ENCODE measurements at regions of chr1 and their contacts with region 1.

Region 1: GRCh38 chr1:24688621-24689195 is 45.6 kb downstream of the SRRM1 start:
- DNase-seq: peak; percentile 63 to 85
- H3K4me3 ChIP-seq: no peak overlapping the region; a peak in 1 of 8 replicates
- H3K27ac ChIP-seq: no peak overlapping the region
- H3K4me1 ChIP-seq: peaks cover 0 to 2% (median 1%) of the 10 kb centered on the region in 4 experiments; a peak in 2 of 7 replicates
- H3K27me3 ChIP-seq: no peaks in the 10 kb centered on the region
- CTCF ChIP-seq: peak; percentile 82 to 94 (median 93)
- EP300 ChIP-seq: no peak
- POLR2A ChIP-seq: no peak
- RAD21 ChIP-seq: peak; percentile 97

Region 2: GRCh38 chr1:24575915-24576587 is 112.7 kb before region 1 on chr1:
- CTCF ChIA-PET with region 1: no interaction called
- POLR2A ChIA-PET with region 1: no interaction called
- DNase-seq: no peak
- H3K4me3 ChIP-seq: no peak overlapping the region
- H3K27ac ChIP-seq: no peak overlapping the region
- H3K4me1 ChIP-seq: no peaks in the 10 kb centered on the region; a peak in 1 of 7 replicates
- H3K27me3 ChIP-seq: no peaks in the 10 kb centered on the region
- CTCF ChIP-seq: no peak
- EP300 ChIP-seq: no peak
- POLR2A ChIP-seq: no peak
- RAD21 ChIP-seq: no peak

Region 3: GRCh38 chr1:24705260-24706073 is 16.8 kb after region 1 on chr1:
- CTCF ChIA-PET with region 1: interaction called, 40 read pairs
- POLR2A ChIA-PET with region 1: interaction called, 4 read pairs
- DNase-seq: peak; percentile 61 to 82
- H3K4me3 ChIP-seq: no peak overlapping the region
- H3K27ac ChIP-seq: no peak overlapping the region
- H3K4me1 ChIP-seq: peaks cover 6 to 12% (median 9%) of the 10 kb centered on the region in 4 experiments; a peak in 5 of 7 replicates
- H3K27me3 ChIP-seq: no peaks in the 10 kb centered on the region
- CTCF ChIP-seq: no peak
- EP300 ChIP-seq: no peak
- POLR2A ChIP-seq: 0 out of 3 replicates have a peak, but pooled peaks of 1 of the 2 experiments have one; percentile 19
- RAD21 ChIP-seq: no peak

Region 4: DNA sequence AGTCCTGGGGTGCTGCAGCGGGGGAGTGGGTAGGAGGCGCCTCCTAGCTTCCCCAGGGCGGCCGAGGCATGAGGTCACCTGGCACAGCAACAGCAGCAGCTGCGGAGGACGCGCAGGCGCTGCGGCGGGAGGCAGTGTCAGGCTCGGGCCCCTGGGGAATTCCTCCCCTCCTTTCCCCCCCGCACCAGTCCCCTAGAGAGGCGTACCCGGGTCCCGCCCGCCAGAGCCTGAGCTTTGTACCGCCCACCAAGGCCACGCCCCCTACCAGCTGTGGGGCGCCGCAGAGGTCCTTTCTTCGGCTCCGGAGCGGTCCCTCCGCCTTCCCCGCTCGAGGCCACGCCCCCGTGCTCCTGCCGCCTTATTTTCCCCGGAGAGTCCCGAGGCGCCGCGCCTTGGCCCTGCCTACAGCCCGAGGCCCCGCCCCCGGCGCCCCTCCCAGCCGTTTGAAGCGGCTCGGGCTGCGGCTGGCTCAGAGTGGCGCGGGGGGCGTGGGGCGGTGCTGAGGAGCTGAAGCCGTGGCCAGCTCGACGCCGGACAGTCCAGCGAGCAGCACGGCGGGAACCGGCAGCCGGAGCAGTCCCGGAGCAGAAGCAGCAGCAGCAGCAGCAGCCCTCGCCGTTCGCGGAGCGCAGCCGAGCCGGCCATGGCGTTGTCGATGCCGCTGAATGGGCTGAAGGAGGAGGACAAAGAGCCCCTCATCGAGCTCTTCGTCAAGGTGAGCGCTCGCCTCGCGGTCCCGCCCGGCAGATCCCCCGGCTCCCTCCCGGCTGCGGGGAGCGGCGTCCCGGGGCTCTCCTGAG is 56.4 kb after region 1 on chr1 and contains the start of gene CLIC4:
- CTCF ChIA-PET with region 1: interaction called, 13 read pairs
- POLR2A ChIA-PET with region 1: interaction called, 3 read pairs
- DNase-seq: peak; percentile 97 to 100
- H3K4me3 ChIP-seq: peak within 1 kb of the TSS; percentile 93 to 97 (median 95)
- H3K27ac ChIP-seq: peak within 1 kb of the TSS; percentile 73
- H3K4me1 ChIP-seq: peaks cover 14 to 31% (median 18%) of the 10 kb centered on the region in 4 experiments; a peak in 6 of 7 replicates
- H3K27me3 ChIP-seq: no peaks in the 10 kb centered on the region
- CTCF ChIP-seq: peak in 2 of 3 experiments; percentile 5 to 11; a peak in 2 of 4 replicates
- EP300 ChIP-seq: no peak
- POLR2A ChIP-seq: peak; percentile 91 to 93
- RAD21 ChIP-seq: peak; percentile 12 to 39; a peak in 2 of 4 replicates
- total RNA-seq, gene CLIC4: 281 and 293 TPM in 2 replicates

Region 5: GRCh38 chr1:24779689-24780464 is 91.2 kb after region 1 on chr1:
- CTCF ChIA-PET with region 1: interaction called, 13 read pairs
- POLR2A ChIA-PET with region 1: no interaction called
- DNase-seq: no peak
- H3K4me3 ChIP-seq: no peak overlapping the region
- H3K27ac ChIP-seq: no peak overlapping the region
- H3K4me1 ChIP-seq: peaks cover 0 to 2% (median 0%) of the 10 kb centered on the region in 4 experiments; a peak in 1 of 7 replicates
- H3K27me3 ChIP-seq: no peaks in the 10 kb centered on the region
- CTCF ChIP-seq: no peak
- EP300 ChIP-seq: no peak
- POLR2A ChIP-seq: 0 out of 3 replicates have a peak, but pooled peaks of 1 of the 2 experiments have one; percentile 20
- RAD21 ChIP-seq: no peak

Region 6: DNA sequence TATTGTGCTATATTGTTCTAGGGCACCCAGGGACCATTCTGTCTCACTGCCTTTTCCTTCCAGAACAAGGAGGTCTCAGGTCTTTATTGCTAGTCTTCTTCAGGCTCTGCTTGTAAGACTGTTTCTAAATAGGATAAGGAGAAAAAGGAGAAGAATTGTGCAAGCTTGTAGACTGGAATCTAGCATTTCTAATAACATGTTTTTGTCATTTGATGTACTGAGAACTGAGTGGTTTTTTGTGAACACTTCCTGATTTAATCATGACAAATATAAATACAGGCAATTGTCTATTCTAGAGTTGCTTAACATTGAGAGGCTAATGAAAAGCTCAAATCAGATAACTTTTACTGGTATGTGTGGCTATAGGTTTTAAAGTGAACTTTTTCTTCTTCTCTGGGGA is 134.2 kb after region 1 on chr1:
- CTCF ChIA-PET with region 1: interaction called, 247 read pairs
- POLR2A ChIA-PET with region 1: no interaction called
- DNase-seq: no peak
- H3K4me3 ChIP-seq: no peak overlapping the region
- H3K27ac ChIP-seq: no peak overlapping the region
- H3K4me1 ChIP-seq: no peaks in the 10 kb centered on the region; a peak in 1 of 7 replicates
- H3K27me3 ChIP-seq: no peaks in the 10 kb centered on the region
- CTCF ChIP-seq: no peak
- EP300 ChIP-seq: no peak
- POLR2A ChIP-seq: no peak
- RAD21 ChIP-seq: no peak

Region 7: GRCh38 chr1:24861821-24862727 is 173.4 kb after region 1 on chr1:
- CTCF ChIA-PET with region 1: interaction called, 15 read pairs
- POLR2A ChIA-PET with region 1: interaction called, 4 read pairs
- DNase-seq: peak in 1 of 2 experiments; percentile 50
- H3K4me3 ChIP-seq: no peak overlapping the region
- H3K27ac ChIP-seq: no peak overlapping the region
- H3K4me1 ChIP-seq: peaks cover 0 to 4% (median 4%) of the 10 kb centered on the region in 4 experiments; a peak in 3 of 7 replicates
- H3K27me3 ChIP-seq: peaks cover 0 to 4% (median 0%) of the 10 kb centered on the region in 4 experiments; a peak in 2 of 7 replicates
- CTCF ChIP-seq: no peak
- EP300 ChIP-seq: no peak
- POLR2A ChIP-seq: no peak
- RAD21 ChIP-seq: no peak

Measured in H1 (cell line).